ENCODE measurements at regions of chr19 and their contacts with region 1.

Region 1: GRCh38 chr19:49877020-49877878 is at the starts of genes AKT1S1 and TBC1D17:
- DNase-seq: peak; percentile 100
- H3K4me3 ChIP-seq: peak within 1 kb of the TSS; percentile 90
- H3K27ac ChIP-seq: peak within 1 kb of the TSS; percentile 80
- H3K4me1 ChIP-seq: peaks cover 28% of the 10 kb centered on the region
- CTCF ChIP-seq: no peak
- total RNA-seq, gene AKT1S1: 7.3 TPM in 2 replicates
- total RNA-seq, gene TBC1D17: 7.9 and 8.0 TPM in 2 replicates

Region 2: GRCh38 chr19:49590071-49590970 is 286.9 kb before region 1 on chr19:
- CTCF ChIA-PET with region 1: no interaction called
- POLR2A ChIA-PET with region 1: no interaction called
- intact Hi-C with region 1: loop called (anchors 5 kb)
- DNase-seq: peak; percentile 99
- H3K4me3 ChIP-seq: peak overlapping the region; percentile 94
- H3K27ac ChIP-seq: peak overlapping the region; percentile 96
- H3K4me1 ChIP-seq: peaks cover 13% of the 10 kb centered on the region
- CTCF ChIP-seq: peak; percentile 16; the same call in 1 of the 2 replicates

Region 3: GRCh38 chr19:49779731-49780589 is 97.3 kb before region 1 on chr19:
- CTCF ChIA-PET with region 1: no interaction called
- POLR2A ChIA-PET with region 1: no interaction called
- intact Hi-C with region 1: no loop called
- DNase-seq: peak; percentile 48
- H3K4me3 ChIP-seq: no peak overlapping the region
- H3K27ac ChIP-seq: peak overlapping the region; percentile 48
- H3K4me1 ChIP-seq: peaks cover 15% of the 10 kb centered on the region
- CTCF ChIP-seq: no peak

Region 4: DNA sequence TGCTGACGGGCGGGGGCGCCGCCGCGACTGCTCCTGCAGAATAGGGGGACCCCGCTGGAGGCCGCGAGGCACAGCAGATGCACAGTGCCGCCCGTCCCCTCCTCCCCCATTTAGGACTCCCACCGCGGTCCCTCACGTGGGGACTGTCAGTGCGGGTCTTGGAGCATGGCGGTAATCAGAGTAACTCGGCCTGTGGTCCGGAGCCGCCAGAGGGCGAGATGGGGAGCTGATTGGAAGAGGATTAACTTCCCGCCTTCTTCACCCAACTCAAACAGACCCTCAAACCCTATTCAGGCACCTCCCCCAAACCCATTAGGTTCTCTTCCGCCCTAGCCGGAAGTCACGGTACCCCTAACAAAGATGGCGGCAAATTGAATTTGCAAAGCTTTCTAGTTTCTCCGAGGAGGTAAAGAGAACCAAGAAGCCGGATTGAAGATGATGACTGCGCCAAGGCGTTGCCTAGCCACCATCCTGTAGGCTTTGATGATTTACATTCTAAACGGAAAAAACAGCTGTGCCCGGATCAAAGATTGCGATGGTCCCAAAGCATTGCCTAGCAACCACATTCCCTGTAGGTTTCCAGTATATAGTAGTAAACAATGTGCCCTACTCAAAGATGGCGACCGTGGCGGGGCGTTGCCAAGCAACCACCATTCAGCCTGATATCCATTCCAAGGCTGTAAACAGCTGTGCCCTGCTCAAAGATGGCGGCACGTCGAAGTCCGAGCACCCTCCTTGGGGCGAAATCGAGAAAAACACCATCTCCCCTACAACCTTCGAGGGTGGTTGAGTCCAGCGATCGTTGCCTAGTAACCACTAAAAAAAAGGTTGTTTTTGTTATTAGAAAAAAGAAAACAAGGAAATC is 64.0 kb before region 1 on chr19 and contains the start of gene FUZ:
- CTCF ChIA-PET with region 1: no interaction called
- POLR2A ChIA-PET with region 1: no interaction called
- intact Hi-C with region 1: loop called (anchors 2 kb)
- DNase-seq: peak; percentile 99
- H3K4me3 ChIP-seq: peak within 1 kb of the TSS; percentile 69
- H3K27ac ChIP-seq: peak within 1 kb of the TSS; percentile 61
- H3K4me1 ChIP-seq: peaks cover 49% of the 10 kb centered on the region
- CTCF ChIP-seq: peak; percentile 71
- total RNA-seq, gene FUZ: 33.6 and 35.1 TPM in 2 replicates

Region 5: GRCh38 chr19:49924004-49924880 is 47.0 kb after region 1 on chr19:
- CTCF ChIA-PET with region 1: no interaction called
- POLR2A ChIA-PET with region 1: interaction called, 4 read pairs
- intact Hi-C with region 1: loop called (anchors 1 kb)
- DNase-seq: peak; percentile 93
- H3K4me3 ChIP-seq: peak overlapping the region; percentile 62
- H3K27ac ChIP-seq: peak overlapping the region; percentile 85
- H3K4me1 ChIP-seq: peaks cover 62% of the 10 kb centered on the region
- CTCF ChIP-seq: no peak

Region 6: GRCh38 chr19:49929611-49930482 is 52.6 kb after region 1 on chr19:
- CTCF ChIA-PET with region 1: no interaction called
- POLR2A ChIA-PET with region 1: interaction called, 4 read pairs
- intact Hi-C with region 1: loop called (anchors 1 kb)
- DNase-seq: peak; percentile 99
- H3K4me3 ChIP-seq: peak overlapping the region; percentile 91
- H3K27ac ChIP-seq: peak overlapping the region; percentile 90
- H3K4me1 ChIP-seq: peaks cover 49% of the 10 kb centered on the region
- CTCF ChIP-seq: no peak

Region 7: GRCh38 chr19:50020481-50020880 is 143.2 kb after region 1 on chr19:
- CTCF ChIA-PET with region 1: no interaction called
- POLR2A ChIA-PET with region 1: no interaction called
- intact Hi-C with region 1: no loop called
- DNase-seq: no peak
- H3K4me3 ChIP-seq: no peak overlapping the region
- H3K27ac ChIP-seq: no peak overlapping the region
- H3K4me1 ChIP-seq: peaks cover 9% of the 10 kb centered on the region
- CTCF ChIP-seq: no peak